ENCODE measurements at regions of chr4 and their contacts with region 1.

Region 1: GRCh38 chr4:153488006-153488891 is 22.1 kb downstream of the TMEM131L start:
- DNase-seq: peak; percentile 88
- ATAC-seq: peak; percentile 57
- H3K4me3 Mint-ChIP-seq: peak overlapping the region; percentile 57
- H3K27ac Mint-ChIP-seq: peak overlapping the region; percentile 92
- H3K4me1 Mint-ChIP-seq: peaks cover 78% of the 10 kb centered on the region
- H3K27me3 Mint-ChIP-seq: no peaks in the 10 kb centered on the region

Region 2: GRCh38 chr4:153432968-153433753 is 55.1 kb before region 1 on chr4:
- CTCF ChIA-PET with region 1: interaction called, 3 read pairs
- POLR2A ChIA-PET with region 1: no interaction called
- intact Hi-C with region 1: loop called in 1 of 2 experiments (anchors 2 kb)
- DNase-seq: peak; percentile 86
- ATAC-seq: peak; percentile 87
- H3K4me3 Mint-ChIP-seq: peak overlapping the region; percentile 68
- H3K27ac Mint-ChIP-seq: peak overlapping the region; percentile 93
- H3K4me1 Mint-ChIP-seq: peaks cover 62% of the 10 kb centered on the region
- H3K27me3 Mint-ChIP-seq: no peaks in the 10 kb centered on the region

Region 3: GRCh38 chr4:153497988-153498967 is 10.0 kb after region 1 on chr4:
- CTCF ChIA-PET with region 1: interaction called, 9 read pairs
- POLR2A ChIA-PET with region 1: interaction called, 15 read pairs
- intact Hi-C with region 1: loop called in 1 of 2 experiments (anchors 1 kb)
- DNase-seq: no peak
- ATAC-seq: peak; percentile 14
- H3K4me3 Mint-ChIP-seq: peak overlapping the region; percentile 75
- H3K27ac Mint-ChIP-seq: peak overlapping the region; percentile 99
- H3K4me1 Mint-ChIP-seq: peaks cover 95% of the 10 kb centered on the region
- H3K27me3 Mint-ChIP-seq: no peaks in the 10 kb centered on the region

Region 4: DNA sequence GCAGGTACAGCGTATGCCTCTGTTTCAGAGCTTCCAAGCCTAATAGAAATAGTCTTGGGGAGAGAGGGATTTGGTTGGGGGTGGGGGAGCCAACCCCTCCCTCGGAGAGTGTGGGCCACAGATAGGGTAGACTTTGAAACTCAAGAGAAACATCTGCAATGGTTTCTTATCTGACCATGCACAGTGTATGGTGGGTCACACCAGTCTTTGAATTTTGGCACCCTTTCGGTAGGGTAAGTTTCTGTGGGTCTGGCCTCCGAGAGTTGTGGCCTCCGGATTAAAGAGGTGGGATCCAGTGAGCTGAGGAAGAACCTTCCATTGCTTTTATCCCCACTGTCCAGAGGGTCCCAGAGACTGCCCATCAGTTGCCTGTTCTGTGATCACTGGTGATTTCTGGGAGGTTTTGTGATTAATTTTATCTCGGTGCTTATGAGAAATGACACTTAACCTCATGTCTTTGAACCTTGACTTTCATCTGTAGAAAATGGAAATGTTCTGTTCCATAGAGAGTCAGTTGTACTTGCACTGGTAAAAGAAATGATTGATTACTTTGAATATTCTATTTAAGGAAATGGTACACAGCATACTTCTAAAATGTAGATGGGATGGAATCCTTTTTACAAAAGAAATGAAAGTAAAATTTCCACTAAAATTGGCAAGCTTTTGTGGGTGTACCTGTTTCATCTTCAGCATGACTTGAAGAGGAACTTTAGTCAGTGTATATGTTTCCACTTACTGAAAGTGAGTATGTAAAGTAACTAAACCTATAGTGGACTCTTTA is 40.6 kb after region 1 on chr4:
- CTCF ChIA-PET with region 1: interaction called, 5 read pairs
- POLR2A ChIA-PET with region 1: interaction called, 4 read pairs
- intact Hi-C with region 1: loop called in 1 of 2 experiments (anchors 1 kb)
- DNase-seq: no peak
- ATAC-seq: peak; percentile 69
- H3K4me3 Mint-ChIP-seq: peak overlapping the region; percentile 57
- H3K27ac Mint-ChIP-seq: peak overlapping the region; percentile 100
- H3K4me1 Mint-ChIP-seq: peaks cover 94% of the 10 kb centered on the region
- H3K27me3 Mint-ChIP-seq: no peaks in the 10 kb centered on the region

Region 5: GRCh38 chr4:153573881-153574802 is 85.9 kb after region 1 on chr4:
- CTCF ChIA-PET with region 1: interaction called, 8 read pairs
- POLR2A ChIA-PET with region 1: interaction called, 3 read pairs
- intact Hi-C with region 1: loop called (anchors 2 to 5 kb)
- DNase-seq: peak; percentile 77
- ATAC-seq: peak; percentile 87
- H3K4me3 Mint-ChIP-seq: no peak overlapping the region
- H3K27ac Mint-ChIP-seq: peak overlapping the region; percentile 39
- H3K4me1 Mint-ChIP-seq: peaks cover 78% of the 10 kb centered on the region
- H3K27me3 Mint-ChIP-seq: no peaks in the 10 kb centered on the region

Measured in activated CD4-positive, alpha-beta T cell treated with anti-CD3 and anti-CD28 coated beads for 36 hours (primary cell).